ENCODE measurements at regions of chr13 and their contacts with region 1.

Region 1: DNA sequence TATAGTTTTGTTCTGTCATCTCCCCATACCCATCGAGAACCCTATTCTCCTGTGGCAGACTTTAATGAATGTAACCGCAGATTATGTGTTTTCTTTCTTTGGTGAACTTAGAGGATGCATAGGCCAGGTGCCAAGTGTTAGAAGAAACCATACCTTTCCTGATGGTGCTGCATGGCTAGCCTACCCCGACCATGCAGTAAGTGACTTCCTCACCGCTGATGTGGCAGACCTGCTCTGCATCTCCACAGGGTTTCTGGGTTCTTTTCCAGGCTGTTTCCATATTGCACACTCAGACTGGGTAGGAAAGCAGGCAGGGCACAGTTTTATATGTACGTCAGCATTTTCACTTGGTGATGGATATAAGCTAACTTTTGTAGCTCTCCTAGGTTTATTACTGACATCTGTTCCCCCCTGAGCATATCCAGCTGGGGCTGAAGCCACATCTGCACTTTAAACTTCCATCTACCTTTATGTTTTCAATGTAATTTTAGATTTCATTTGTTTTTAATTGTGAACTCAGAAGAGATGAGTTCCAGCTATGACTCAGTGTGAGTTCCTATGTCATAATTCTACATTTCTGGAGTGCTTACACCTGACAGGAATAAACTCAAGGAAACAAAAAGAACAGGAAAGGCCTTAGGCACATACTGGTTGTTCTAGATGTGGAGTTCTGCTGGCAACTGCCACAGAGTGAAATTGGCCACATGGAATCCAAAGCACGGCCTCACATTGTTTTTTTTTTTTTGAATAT is 42.3 kb downstream of the LRCH1 start:
- DNase-seq: no peak
- H3K4me3 Mint-ChIP-seq: no peak overlapping the region
- H3K27ac Mint-ChIP-seq: no peak overlapping the region
- H3K4me1 Mint-ChIP-seq: peaks cover 60% of the 10 kb centered on the region
- H3K27me3 Mint-ChIP-seq: peaks cover 5% of the 10 kb centered on the region

Region 2: GRCh38 chr13:46354156-46355091 is 240.9 kb before region 1 on chr13:
- intact Hi-C with region 1: loop called (anchors 10 kb)
- DNase-seq: peak; percentile 81
- H3K4me3 Mint-ChIP-seq: peak overlapping the region; percentile 21
- H3K27ac Mint-ChIP-seq: peak overlapping the region; percentile 95
- H3K4me1 Mint-ChIP-seq: peaks cover 14% of the 10 kb centered on the region
- H3K27me3 Mint-ChIP-seq: no peaks in the 10 kb centered on the region

Region 3: DNA sequence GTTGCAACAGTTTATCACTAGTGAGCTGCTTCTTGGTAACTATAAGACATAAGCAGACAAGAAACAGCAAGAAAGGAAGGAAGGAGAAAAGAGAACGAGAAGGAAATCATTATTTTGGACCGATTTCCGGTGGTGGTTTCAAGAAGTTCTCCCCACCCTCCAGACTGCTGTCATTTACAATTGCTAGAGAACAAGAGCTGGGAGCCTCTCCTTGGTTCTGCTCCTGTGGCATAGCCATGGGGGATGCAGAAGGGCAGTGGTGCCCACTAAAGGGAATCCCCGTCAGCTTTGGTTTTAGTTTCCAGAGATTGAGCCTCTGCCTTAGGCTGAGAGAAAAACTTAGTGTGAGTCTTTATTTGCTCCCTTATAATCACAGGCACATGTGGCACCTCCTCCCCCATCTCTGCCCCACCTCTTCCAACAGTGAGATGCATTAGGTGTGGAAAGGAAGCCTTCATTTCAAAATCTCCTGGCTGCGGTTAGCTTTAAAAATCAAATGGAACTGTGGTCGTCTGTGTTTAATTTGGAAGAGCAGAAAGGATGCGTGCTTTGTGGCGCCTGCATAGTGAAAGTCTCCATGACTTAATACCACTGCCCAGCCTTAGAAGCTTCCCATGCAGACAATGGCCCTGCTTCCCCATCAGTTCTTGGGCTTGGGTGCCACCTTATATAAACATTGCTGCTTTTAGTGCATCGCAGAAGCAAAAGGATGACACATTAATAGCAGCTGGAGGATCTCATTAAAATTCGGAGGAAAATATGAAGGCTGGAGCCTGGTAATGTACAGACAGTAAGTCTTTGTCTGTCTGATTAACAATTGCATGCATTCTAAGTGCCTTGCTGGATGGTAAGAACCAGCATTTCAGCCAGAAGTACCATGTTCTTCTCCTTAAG is 17.4 kb before region 1 on chr13:
- intact Hi-C with region 1: loop called (anchors 1 kb)
- DNase-seq: no peak
- H3K4me3 Mint-ChIP-seq: peak overlapping the region; percentile 45
- H3K27ac Mint-ChIP-seq: peak overlapping the region; percentile 65
- H3K4me1 Mint-ChIP-seq: peaks cover 46% of the 10 kb centered on the region
- H3K27me3 Mint-ChIP-seq: no peaks in the 10 kb centered on the region

Region 4: GRCh38 chr13:46605825-46606554 is 10.7 kb after region 1 on chr13:
- intact Hi-C with region 1: loop called (anchors 2 kb)
- DNase-seq: no peak
- H3K4me3 Mint-ChIP-seq: peak overlapping the region; percentile 14
- H3K27ac Mint-ChIP-seq: peak overlapping the region; percentile 13
- H3K4me1 Mint-ChIP-seq: peaks cover 48% of the 10 kb centered on the region
- H3K27me3 Mint-ChIP-seq: no peaks in the 10 kb centered on the region

Region 5: DNA sequence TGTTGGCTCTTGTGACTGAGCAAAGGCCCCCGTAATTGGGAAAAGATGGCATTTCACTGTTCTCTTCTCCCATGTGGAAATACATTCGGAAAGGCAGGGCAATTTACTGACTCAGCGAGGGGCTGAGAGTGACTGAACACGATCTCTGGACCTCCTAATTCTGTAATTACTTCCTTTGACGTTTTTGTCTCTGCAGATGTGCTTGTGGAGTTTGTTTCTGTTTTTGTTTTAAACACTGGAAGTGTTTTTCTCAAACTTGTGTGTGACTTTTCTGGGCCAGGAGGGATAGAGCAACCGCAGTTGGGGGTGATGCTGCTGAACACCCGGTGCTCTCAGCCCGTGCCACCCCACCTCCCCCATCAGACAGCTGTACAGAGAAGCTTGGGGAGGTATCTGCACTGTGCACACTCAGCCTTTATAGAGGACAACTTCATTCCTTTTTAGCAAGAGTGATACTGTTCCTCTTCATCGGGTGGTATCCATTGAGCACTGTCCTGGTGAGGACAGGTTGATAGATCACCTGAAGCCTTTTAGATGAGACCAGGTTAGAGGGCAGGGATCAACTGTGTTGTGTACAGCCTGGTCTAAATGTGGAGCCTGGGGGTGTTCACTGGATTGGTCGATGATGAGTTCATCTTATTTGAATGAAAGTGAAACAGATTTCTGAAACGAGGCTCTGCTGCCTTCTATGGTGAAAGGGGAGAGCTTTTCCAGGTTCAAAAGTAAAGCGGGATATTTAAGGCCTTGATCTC is 84.2 kb after region 1 on chr13:
- intact Hi-C with region 1: loop called (anchors 5 kb)
- DNase-seq: peak; percentile 86
- H3K4me3 Mint-ChIP-seq: no peak overlapping the region
- H3K27ac Mint-ChIP-seq: no peak overlapping the region
- H3K4me1 Mint-ChIP-seq: peaks cover 26% of the 10 kb centered on the region
- H3K27me3 Mint-ChIP-seq: no peaks in the 10 kb centered on the region

Region 6: GRCh38 chr13:48078251-48078656 is 1482.9 kb after region 1 on chr13:
- intact Hi-C with region 1: no loop called
- DNase-seq: peak; percentile 80
- H3K4me3 Mint-ChIP-seq: no peak overlapping the region
- H3K27ac Mint-ChIP-seq: peak overlapping the region; percentile 11
- H3K4me1 Mint-ChIP-seq: peaks cover 8% of the 10 kb centered on the region
- H3K27me3 Mint-ChIP-seq: no peaks in the 10 kb centered on the region

Measured in activated CD4-positive, alpha-beta T cell treated with anti-CD3 and anti-CD28 coated beads, Interleukin-2, amount 10 ng/mL, durations not matched to agents 24 days and 14 days (primary cell).